Heart left ventricle (tissue), 16 donors: ENCODE measurements at regions of chr10 and their contacts with region 1.

Region 1: DNA sequence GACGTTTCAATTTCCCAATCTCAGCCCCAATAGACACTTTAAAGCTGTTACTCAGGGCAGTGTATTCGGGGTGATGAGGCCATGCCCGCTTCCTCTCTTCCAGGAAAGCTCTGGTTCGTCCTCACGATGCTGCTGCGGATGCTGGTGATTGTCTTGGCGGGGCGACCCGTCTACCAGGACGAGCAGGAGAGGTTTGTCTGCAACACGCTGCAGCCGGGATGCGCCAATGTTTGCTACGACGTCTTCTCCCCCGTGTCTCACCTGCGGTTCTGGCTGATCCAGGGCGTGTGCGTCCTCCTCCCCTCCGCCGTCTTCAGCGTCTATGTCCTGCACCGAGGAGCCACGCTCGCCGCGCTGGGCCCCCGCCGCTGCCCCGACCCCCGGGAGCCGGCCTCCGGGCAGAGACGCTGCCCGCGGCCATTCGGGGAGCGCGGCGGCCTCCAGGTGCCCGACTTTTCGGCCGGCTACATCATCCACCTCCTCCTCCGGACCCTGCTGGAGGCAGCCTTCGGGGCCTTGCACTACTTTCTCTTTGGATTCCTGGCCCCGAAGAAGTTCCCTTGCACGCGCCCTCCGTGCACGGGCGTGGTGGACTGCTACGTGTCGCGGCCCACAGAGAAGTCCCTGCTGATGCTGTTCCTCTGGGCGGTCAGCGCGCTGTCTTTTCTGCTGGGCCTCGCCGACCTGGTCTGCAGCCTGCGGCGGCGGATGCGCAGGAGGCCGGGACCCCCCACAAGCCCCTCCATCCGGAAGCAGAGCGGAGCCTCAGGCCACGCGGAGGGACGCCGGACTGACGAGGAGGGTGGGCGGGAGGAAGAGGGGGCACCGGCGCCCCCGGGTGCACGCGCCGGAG is 2.6 kb downstream of the GJD4 start:
- DNase-seq: peak in 2 of 5 donors; percentile 26 to 59
- ATAC-seq: peak in 2 of 4 donors; percentile 26 to 55
- H3K4me3 ChIP-seq: peak overlapping the region; percentile 37 to 62 (median 52)
- H3K27ac ChIP-seq: no peak overlapping the region
- H3K4me1 ChIP-seq: peaks cover 0 to 12% (median 2%) of the 10 kb centered on the region in 12 donors
- H3K27me3 ChIP-seq: peaks cover 0 to 36% (median 26%) of the 10 kb centered on the region in 9 donors
- CTCF ChIP-seq: no peak
- POLR2A ChIP-seq: no peak

Region 2: DNA sequence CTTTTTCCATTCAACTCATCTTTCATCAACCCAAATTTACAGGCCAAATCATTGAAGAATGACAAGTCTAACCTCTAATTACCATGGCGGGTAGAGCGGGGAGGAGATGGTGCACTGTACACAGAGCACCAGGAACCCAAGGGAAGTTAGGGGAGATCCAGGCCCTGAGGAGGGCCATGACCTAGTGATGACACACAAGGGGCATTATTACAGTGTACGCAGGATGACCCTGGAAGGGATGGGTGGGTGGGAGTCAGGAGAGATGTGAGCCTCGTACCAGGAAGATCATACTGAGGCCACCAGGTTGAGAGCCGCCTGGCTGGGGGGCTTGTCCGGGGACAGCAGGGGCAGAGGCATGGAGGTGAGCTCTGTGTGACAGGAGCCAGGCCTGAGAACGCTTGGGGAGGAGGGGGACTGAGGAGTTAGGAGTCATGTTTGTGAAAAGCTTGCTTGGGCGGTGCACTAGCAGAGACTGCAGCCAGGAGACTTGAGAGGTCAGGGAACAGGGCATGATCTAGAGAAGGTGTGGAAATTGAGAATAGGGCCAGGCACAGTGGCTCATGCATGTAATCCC is 360.8 kb before region 1 on chr10:
- intact Hi-C with region 1: loop called in 1 of 10 experiments (anchors 10 kb)
- DNase-seq: no peak
- ATAC-seq: no peak
- H3K4me3 ChIP-seq: no peak overlapping the region
- H3K27ac ChIP-seq: no peak overlapping the region
- H3K4me1 ChIP-seq: no peaks in the 10 kb centered on the region
- H3K27me3 ChIP-seq: no peaks in the 10 kb centered on the region
- CTCF ChIP-seq: no peak
- POLR2A ChIP-seq: no peak